Panc1 (cell line): ENCODE measurements at regions of chr1 and their contacts with region 1.

Region 1: GRCh38 chr1:27760426-27760825 is 12.6 kb upstream of the STX12 start:
- DNase-seq: no peak
- ATAC-seq: no peak
- H3K4me3 ChIP-seq: no peak overlapping the region
- H3K27ac ChIP-seq: no peak overlapping the region
- H3K4me1 ChIP-seq: no peaks in the 10 kb centered on the region
- H3K27me3 ChIP-seq: no peaks in the 10 kb centered on the region
- CTCF ChIP-seq: no peak; the same call in 1 of the 2 replicates

Region 2: GRCh38 chr1:27744556-27744955 is 15.9 kb before region 1 on chr1:
- CTCF ChIA-PET with region 1: no interaction called
- POLR2A ChIA-PET with region 1: interaction called, 18 read pairs
- in situ Hi-C with region 1: no loop called
- intact Hi-C with region 1: no loop called
- DNase-seq: no peak
- ATAC-seq: no peak; the same call in 1 of the 2 replicates
- H3K4me3 ChIP-seq: no peak overlapping the region
- H3K27ac ChIP-seq: no peak overlapping the region
- H3K4me1 ChIP-seq: no peaks in the 10 kb centered on the region
- H3K27me3 ChIP-seq: no peaks in the 10 kb centered on the region
- CTCF ChIP-seq: no peak

Region 3: DNA sequence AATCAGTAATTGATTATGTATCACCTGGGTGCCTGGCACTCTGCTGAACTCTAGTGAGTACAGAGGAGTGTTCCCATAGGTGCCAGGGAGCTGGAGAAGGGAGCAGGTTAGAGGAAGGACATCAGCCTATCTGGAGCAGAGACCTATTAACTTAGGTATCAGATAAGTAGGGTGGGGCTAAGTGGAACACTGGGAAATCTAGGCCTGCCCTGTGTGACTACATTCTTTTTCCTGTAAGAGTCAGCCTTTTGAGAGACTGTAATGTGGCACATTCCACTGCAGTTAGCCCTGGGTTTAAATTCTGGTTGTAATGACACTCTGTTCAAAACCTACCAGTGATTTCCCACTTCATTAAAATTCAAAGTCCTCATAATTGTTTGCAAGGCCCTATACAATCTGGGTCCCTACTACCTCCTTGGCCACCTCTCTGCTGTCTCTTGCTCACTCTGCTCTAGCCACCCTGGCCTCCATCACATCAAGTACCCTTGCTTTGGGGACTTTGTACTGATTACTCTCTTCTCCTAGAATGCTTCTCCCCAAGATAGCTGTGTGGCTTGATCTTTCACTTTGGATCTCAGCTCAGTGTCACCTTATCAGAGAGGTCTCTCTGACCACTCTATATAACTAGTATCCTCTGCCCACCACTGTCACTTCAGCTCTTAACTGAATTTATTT is 25.5 kb after region 1 on chr1:
- CTCF ChIA-PET with region 1: no interaction called
- POLR2A ChIA-PET with region 1: no interaction called
- in situ Hi-C with region 1: no loop called
- intact Hi-C with region 1: no loop called
- DNase-seq: no peak
- ATAC-seq: no peak
- H3K4me3 ChIP-seq: no peak overlapping the region
- H3K27ac ChIP-seq: no peak overlapping the region
- H3K4me1 ChIP-seq: no peaks in the 10 kb centered on the region
- H3K27me3 ChIP-seq: no peaks in the 10 kb centered on the region
- CTCF ChIP-seq: no peak

Region 4: GRCh38 chr1:28822788-28823187 is 1062.4 kb after region 1 on chr1:
- CTCF ChIA-PET with region 1: no interaction called
- POLR2A ChIA-PET with region 1: no interaction called
- in situ Hi-C with region 1: no loop called
- intact Hi-C with region 1: no loop called
- DNase-seq: no peak
- ATAC-seq: no peak
- H3K4me3 ChIP-seq: no peak overlapping the region
- H3K27ac ChIP-seq: no peak overlapping the region
- H3K4me1 ChIP-seq: peaks cover 3% of the 10 kb centered on the region
- H3K27me3 ChIP-seq: no peaks in the 10 kb centered on the region
- CTCF ChIP-seq: no peak